HCT116 (cell line): ENCODE measurements at regions of chr14 and their contacts with region 1.

Region 1: GRCh38 chr14:51056421-51056820 is 38.5 kb downstream of the TRIM9 start:
- DNase-seq: no peak
- ATAC-seq: no peak
- H3K4me3 ChIP-seq: no peak overlapping the region
- H3K27ac ChIP-seq: no peak overlapping the region
- H3K4me1 ChIP-seq: no peaks in the 10 kb centered on the region
- H3K27me3 ChIP-seq: no peaks in the 10 kb centered on the region
- CTCF ChIP-seq: no peak
- POLR2A ChIP-seq: no peak
- RAD21 ChIP-seq: no peak

Region 2: GRCh38 chr14:50311975-50312733 is 744.3 kb before region 1 on chr14 and contains the starts of genes DMAC2L and L2HGDH:
- CTCF ChIA-PET with region 1: no interaction called
- POLR2A ChIA-PET with region 1: no interaction called
- RAD21 ChIA-PET with region 1: no interaction called
- intact Hi-C with region 1: no loop called
- DNase-seq: peak; percentile 88
- ATAC-seq: peak; percentile 93
- H3K4me3 ChIP-seq: peak within 1 kb of the TSS; percentile 76 to 87
- H3K27ac ChIP-seq: peak within 1 kb of the TSS; percentile 84
- H3K4me1 ChIP-seq: peaks cover 0 to 27% of the 10 kb centered on the region in 2 experiments; a peak in 3 of 4 replicates
- H3K27me3 ChIP-seq: no peaks in the 10 kb centered on the region
- CTCF ChIP-seq: no peak
- POLR2A ChIP-seq: peak; percentile 54
- RAD21 ChIP-seq: 0 out of 2 replicates have a peak, but pooled peaks have one; percentile 19
- total RNA-seq, gene DMAC2L: 8.9 TPM
- total RNA-seq, gene L2HGDH: 16.9 TPM

Region 3: GRCh38 chr14:51996148-51996746 is 939.8 kb after region 1 on chr14:
- CTCF ChIA-PET with region 1: no interaction called
- POLR2A ChIA-PET with region 1: no interaction called
- RAD21 ChIA-PET with region 1: no interaction called
- intact Hi-C with region 1: loop called (anchors 5 kb)
- DNase-seq: no peak
- ATAC-seq: no peak
- H3K4me3 ChIP-seq: no peak overlapping the region
- H3K27ac ChIP-seq: no peak overlapping the region
- H3K4me1 ChIP-seq: no peaks in the 10 kb centered on the region
- H3K27me3 ChIP-seq: no peaks in the 10 kb centered on the region
- CTCF ChIP-seq: peak in 2 of 3 experiments; percentile 27 to 61; a peak in 3 of 6 replicates
- POLR2A ChIP-seq: no peak
- RAD21 ChIP-seq: peak; percentile 37; the same call in 1 of the 2 replicates